Activated CD8-positive, alpha-beta T cell treated with anti-CD3 and anti-CD28 coated beads for 36 hours (primary cell): ENCODE measurements at regions of chr7 and their contacts with region 1.

Region 1: DNA sequence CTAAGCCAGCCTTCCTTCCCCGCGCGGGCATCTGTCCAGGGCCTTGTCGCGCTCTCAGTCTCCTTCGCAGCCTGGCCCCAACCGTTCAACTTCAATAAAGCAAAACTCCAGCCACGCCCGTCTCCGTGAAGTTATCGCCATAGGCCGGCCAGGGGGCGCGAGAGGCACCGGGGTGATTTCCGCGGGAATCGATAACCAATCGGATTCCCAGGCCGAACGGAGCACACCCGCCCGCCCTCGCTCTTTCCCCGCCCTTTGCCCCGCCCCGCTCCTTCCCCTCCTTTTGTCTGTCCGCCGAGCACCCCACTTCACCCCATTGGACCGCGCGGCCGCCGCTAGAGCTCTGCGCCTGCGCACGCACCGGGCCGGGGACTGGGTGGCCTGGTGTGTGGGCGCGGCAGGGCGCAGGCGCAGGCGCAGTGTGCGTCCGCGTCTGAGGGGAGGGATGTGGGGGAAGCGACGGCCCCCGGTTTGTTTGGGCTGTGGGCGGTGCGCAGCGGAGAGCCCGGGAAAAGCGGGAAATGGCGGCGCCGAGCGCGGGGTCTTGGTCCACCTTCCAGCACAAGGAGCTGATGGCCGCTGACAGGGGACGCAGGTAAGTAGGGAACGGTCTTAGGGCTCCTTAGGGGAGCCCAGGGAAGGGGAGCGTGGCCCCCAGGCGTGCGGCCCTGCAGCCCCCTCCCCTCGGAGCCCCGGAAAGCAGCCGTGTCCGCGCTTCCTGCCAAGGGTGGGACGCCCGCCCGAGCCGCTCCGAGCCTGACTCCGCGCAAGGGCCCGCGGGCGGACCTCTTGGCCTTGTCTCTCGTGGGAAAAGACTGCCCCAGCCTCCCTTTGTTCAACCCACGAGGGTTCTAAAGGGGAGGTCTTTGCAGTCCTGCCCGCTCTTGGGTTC is at the start of gene CASP2:
- DNase-seq: peak; percentile 98
- ATAC-seq: peak; percentile 96
- H3K4me3 Mint-ChIP-seq: peak within 1 kb of the TSS; percentile 88
- H3K27ac Mint-ChIP-seq: peak within 1 kb of the TSS; percentile 89
- H3K4me1 Mint-ChIP-seq: peaks cover 42% of the 10 kb centered on the region
- H3K27me3 Mint-ChIP-seq: no peaks in the 10 kb centered on the region
- CTCF ChIP-seq: no peak
- total RNA-seq, gene CASP2: 79.6 to 80.9 TPM

Region 2: DNA sequence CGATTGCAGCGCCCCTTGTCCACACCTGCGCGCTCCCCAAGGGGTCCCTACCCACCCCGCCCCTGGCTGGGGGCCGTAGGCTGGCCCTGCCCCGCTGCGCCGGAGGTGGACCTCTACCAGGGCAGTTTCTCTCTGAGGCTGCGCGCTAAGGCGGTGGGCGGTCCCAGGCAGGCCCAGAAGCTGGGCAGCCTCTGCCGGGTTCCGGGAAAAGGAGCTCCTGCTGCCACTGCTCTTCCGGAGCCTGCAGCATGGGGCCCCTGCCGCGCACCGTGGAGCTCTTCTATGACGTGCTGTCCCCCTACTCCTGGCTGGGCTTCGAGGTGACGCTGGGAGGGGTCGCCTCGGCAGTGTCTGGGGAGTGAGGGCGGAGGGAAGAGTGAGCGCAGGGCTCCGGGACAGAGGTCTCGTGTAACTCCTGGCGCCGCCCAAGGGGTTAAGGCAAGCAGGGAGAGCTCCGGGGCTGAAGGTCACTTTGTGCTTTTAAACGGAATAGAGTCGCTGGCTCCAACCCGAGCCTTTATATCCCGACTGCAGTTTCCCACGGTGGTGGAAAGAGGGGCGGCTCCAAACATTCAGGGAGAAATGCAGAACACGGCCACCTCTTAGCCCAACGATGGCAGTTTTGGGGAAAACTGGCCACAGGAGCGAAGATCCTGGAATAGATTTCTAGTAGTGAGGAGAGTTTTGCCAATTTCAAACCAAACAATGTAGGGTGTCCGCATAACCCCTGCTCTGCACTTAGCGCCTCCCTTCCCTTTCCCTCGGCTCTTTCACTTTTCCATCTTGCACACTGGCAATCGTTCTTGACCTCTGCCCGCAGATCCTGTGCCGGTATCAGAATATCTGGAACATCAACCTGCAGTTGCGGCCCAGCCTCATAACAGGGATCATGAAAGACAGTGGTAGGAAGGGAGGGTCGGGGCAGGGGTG is 24.6 kb before region 1 on chr7 and contains the start of gene GSTK1:
- CTCF ChIA-PET with region 1: interaction called, 4 read pairs
- POLR2A ChIA-PET with region 1: interaction called, 72 read pairs
- intact Hi-C with region 1: no loop called
- DNase-seq: peak; percentile 86
- ATAC-seq: peak; percentile 96
- H3K4me3 Mint-ChIP-seq: peak within 1 kb of the TSS; percentile 90
- H3K27ac Mint-ChIP-seq: peak within 1 kb of the TSS; percentile 97
- H3K4me1 Mint-ChIP-seq: peaks cover 52% of the 10 kb centered on the region
- H3K27me3 Mint-ChIP-seq: no peaks in the 10 kb centered on the region
- CTCF ChIP-seq: no peak
- total RNA-seq, gene GSTK1: 163 to 171 TPM

Region 3: DNA sequence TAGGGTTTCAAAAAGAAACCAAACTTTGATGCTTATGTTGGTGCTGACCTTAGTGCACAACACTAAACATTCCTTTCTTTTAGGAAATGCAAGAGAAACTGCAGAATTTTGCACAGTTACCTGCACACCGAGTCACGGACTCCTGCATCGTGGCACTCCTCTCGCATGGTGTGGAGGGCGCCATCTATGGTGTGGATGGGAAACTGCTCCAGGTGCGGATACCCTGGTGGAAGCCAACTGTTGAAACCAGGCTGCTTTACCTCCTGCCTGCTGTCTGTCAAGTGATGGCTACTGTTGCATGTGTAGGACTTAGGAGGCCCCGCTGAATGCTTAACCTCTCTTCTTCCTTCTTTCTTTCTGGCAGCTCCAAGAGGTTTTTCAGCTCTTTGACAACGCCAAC is 11.7 kb after region 1 on chr7:
- CTCF ChIA-PET with region 1: interaction called, 65 read pairs
- POLR2A ChIA-PET with region 1: interaction called, 6 read pairs
- intact Hi-C with region 1: no loop called
- DNase-seq: peak; percentile 67
- ATAC-seq: peak; percentile 90
- H3K4me3 Mint-ChIP-seq: no peak overlapping the region
- H3K27ac Mint-ChIP-seq: no peak overlapping the region
- H3K4me1 Mint-ChIP-seq: peaks cover 51% of the 10 kb centered on the region
- H3K27me3 Mint-ChIP-seq: no peaks in the 10 kb centered on the region
- CTCF ChIP-seq: peak; percentile 52

Region 4: DNA sequence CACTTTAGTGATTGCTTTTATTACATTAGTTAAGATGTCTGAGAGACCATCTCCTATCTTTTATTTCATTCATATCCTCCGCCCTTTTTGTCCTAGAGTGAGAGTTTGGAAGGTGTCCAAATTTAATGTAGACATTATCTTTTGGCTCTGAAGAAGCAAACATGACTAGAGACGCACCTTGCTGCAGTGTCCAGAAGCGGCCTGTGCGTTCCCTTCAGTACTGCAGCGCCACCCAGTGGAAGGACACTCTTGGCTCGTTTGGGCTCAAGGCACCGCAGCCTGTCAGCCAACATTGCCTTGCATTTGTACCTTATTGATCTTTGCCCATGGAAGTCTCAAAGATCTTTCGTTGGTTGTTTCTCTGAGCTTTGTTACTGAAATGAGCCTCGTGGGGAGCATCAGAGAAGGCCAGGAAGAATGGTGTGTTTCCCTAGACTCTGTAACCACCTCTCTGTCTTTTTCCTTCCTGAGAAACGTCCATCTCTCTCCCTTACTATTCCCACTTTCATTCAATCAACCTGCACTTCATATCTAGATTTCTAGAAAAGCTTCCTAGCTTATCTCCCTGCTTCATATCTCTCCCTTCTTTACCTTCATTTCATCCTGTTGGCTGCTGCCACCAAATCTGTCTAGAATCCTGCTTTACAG is 17.4 kb after region 1 on chr7:
- CTCF ChIA-PET with region 1: interaction called, 65 read pairs
- POLR2A ChIA-PET with region 1: interaction called, 6 read pairs
- intact Hi-C with region 1: no loop called
- DNase-seq: peak; percentile 86
- ATAC-seq: peak; percentile 86
- H3K4me3 Mint-ChIP-seq: no peak overlapping the region
- H3K27ac Mint-ChIP-seq: peak overlapping the region; percentile 58
- H3K4me1 Mint-ChIP-seq: peaks cover 46% of the 10 kb centered on the region
- H3K27me3 Mint-ChIP-seq: no peaks in the 10 kb centered on the region
- CTCF ChIP-seq: peak; percentile 82